ENCODE measurements at regions of chr5 and their contacts with region 1.

Region 1: GRCh38 chr5:135829681-135830383 is 4.6 kb upstream of the SLC25A48 start:
- DNase-seq: peak; percentile 68
- ATAC-seq: peak; percentile 55; the same call in 1 of the 2 replicates
- H3K4me3 ChIP-seq: no peak overlapping the region
- H3K27ac ChIP-seq: no peak overlapping the region
- H3K4me1 ChIP-seq: no peaks in the 10 kb centered on the region
- H3K27me3 ChIP-seq: peaks cover 23% of the 10 kb centered on the region
- CTCF ChIP-seq: peak; percentile 82

Region 2: DNA sequence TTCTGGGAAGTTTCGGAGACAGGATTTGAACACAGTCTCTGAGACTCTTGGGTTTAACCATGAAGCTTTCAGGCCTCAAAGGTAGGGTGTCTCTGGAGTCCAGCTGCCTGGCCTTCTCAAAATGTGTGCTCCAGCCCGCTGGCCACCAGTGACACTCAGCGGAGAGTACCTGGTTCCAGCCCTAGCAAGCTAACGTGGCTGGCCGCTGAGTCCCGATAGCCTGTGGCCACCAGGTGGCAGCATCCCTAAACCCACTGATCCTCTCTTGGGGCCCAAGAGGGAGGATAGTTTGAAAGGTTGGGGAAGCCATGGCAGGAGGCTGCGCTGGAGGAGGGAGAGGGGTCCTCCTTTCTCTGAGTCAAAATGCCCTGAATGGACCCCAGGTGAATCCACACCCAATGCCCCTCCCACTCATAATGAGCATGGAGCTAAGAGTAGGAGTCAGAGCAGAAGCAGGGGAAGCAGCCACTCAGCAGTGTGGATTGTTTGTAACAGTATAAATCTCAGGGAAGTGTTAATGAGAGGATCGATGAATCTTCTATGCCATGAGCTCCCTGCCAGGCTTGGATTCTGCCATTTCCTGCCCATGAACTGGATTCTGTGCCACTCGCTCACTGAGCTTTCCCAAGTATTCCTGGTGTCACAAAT is 372.3 kb before region 1 on chr5:
- CTCF ChIA-PET with region 1: no interaction called
- POLR2A ChIA-PET with region 1: no interaction called
- intact Hi-C with region 1: loop called (anchors 10 kb)
- DNase-seq: peak; percentile 69
- ATAC-seq: peak; percentile 74
- H3K4me3 ChIP-seq: no peak overlapping the region
- H3K27ac ChIP-seq: no peak overlapping the region
- H3K4me1 ChIP-seq: peaks cover 9% of the 10 kb centered on the region; the same call in 1 of the 2 replicates
- H3K27me3 ChIP-seq: no peaks in the 10 kb centered on the region
- CTCF ChIP-seq: peak; percentile 78

Region 3: DNA sequence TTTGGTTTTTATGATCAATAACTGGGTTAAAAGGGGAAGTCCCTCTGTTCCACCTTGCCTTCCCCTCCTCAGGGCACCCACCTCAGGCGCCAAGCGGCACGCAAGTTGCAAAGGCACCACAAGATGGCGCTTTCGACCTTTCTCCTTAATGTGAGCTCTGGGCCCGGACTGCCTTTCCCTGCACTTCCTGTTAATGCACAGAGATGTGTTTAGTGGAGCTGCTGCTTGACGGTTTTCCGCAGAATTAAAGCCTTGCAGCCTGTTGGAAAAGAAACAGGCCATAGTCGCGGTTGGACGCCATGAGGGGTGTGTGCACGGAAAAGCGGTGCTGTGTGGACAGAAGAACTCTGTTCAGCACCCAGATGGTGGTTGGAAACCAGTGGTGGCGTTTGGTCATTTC is 269.0 kb before region 1 on chr5:
- CTCF ChIA-PET with region 1: no interaction called
- POLR2A ChIA-PET with region 1: no interaction called
- intact Hi-C with region 1: loop called (anchors 10 kb)
- DNase-seq: peak; percentile 78
- ATAC-seq: peak; percentile 94
- H3K4me3 ChIP-seq: no peak overlapping the region
- H3K27ac ChIP-seq: no peak overlapping the region
- H3K4me1 ChIP-seq: no peaks in the 10 kb centered on the region
- H3K27me3 ChIP-seq: peaks cover 5% of the 10 kb centered on the region; the same call in 1 of the 2 replicates
- CTCF ChIP-seq: peak; percentile 75

Region 4: GRCh38 chr5:135678640-135679268 is 151.1 kb before region 1 on chr5:
- CTCF ChIA-PET with region 1: no interaction called
- POLR2A ChIA-PET with region 1: no interaction called
- intact Hi-C with region 1: no loop called
- DNase-seq: no peak
- ATAC-seq: no peak
- H3K4me3 ChIP-seq: no peak overlapping the region
- H3K27ac ChIP-seq: no peak overlapping the region
- H3K4me1 ChIP-seq: no peaks in the 10 kb centered on the region
- H3K27me3 ChIP-seq: peaks cover 5% of the 10 kb centered on the region; the same call in 1 of the 2 replicates
- CTCF ChIP-seq: no peak

Region 5: GRCh38 chr5:135761746-135762145 is 68.1 kb before region 1 on chr5:
- CTCF ChIA-PET with region 1: no interaction called
- POLR2A ChIA-PET with region 1: no interaction called
- intact Hi-C with region 1: no loop called
- DNase-seq: no peak
- ATAC-seq: no peak
- H3K4me3 ChIP-seq: no peak overlapping the region
- H3K27ac ChIP-seq: no peak overlapping the region
- H3K4me1 ChIP-seq: no peaks in the 10 kb centered on the region
- H3K27me3 ChIP-seq: peaks cover 53% of the 10 kb centered on the region
- CTCF ChIP-seq: no peak

Region 6: GRCh38 chr5:135800656-135801055 is 29.2 kb before region 1 on chr5:
- CTCF ChIA-PET with region 1: no interaction called
- POLR2A ChIA-PET with region 1: no interaction called
- intact Hi-C with region 1: no loop called
- DNase-seq: no peak
- ATAC-seq: no peak
- H3K4me3 ChIP-seq: no peak overlapping the region
- H3K27ac ChIP-seq: no peak overlapping the region
- H3K4me1 ChIP-seq: no peaks in the 10 kb centered on the region
- H3K27me3 ChIP-seq: peaks cover 58% of the 10 kb centered on the region
- CTCF ChIP-seq: no peak

Region 7: DNA sequence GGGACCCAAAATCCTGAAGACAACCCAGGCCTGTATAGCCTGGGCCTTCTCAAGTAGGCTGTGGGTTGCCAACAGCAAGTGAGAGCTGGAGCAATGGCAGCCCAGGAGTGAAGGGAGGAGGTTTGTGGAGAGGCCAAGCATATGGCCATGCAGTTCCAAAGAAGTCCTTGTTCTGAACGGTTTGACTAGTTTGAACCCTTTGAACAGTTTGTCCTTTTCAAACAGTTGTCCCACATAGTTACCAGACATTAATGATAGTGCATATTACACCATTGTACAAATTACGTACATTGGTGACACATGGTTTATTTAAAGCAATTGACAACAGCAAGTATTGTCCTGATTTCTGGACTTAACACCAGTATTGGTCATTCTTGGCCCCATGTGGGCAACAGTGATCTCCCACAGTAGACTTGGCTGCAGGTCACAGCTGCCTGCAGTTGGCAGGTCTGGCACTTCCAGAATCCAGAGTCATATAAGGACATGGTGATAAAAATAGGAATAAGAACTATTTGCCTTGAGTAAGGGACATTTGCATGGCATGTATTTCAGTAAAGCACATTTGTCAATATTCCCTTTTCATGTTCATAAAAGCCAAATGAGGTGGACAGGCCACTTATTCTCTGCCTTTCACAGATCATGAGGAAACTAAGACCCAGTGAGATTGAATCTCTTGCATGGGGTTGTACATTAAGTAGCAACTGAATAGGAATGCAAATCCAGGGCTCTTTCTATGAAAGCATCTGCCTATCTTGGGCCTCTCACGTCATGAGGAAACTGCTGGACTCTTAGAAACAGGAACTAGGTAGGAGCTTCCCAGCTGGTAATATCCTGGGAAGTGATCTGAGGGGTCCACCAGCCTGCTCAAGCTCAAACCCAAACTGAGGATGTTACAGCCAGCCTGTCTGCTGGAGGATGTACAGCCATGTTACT is 34.9 kb after region 1 on chr5:
- CTCF ChIA-PET with region 1: no interaction called
- POLR2A ChIA-PET with region 1: no interaction called
- intact Hi-C with region 1: no loop called
- DNase-seq: no peak
- ATAC-seq: no peak
- H3K4me3 ChIP-seq: no peak overlapping the region
- H3K27ac ChIP-seq: no peak overlapping the region
- H3K4me1 ChIP-seq: no peaks in the 10 kb centered on the region
- H3K27me3 ChIP-seq: peaks cover 18% of the 10 kb centered on the region; the same call in 1 of the 2 replicates
- CTCF ChIP-seq: no peak

Measured in PC-3 (cell line).